Cardiac septum (tissue), 1 donor: ENCODE measurements at regions of chr10 and their contacts with region 1.

Region 1: GRCh38 chr10:43420369-43421200 is 11.6 kb upstream of the HNRNPF start:
- DNase-seq: peak; percentile 91

Region 2: GRCh38 chr10:43407576-43408330 is 12.8 kb before region 1 on chr10:
- intact Hi-C with region 1: loop called (anchors 1 kb)
- DNase-seq: peak; percentile 97

Region 3: GRCh38 chr10:43436400-43437140 is 16.0 kb after region 1 on chr10 and contains the start of gene ZNF487:
- intact Hi-C with region 1: loop called (anchors 1 kb)
- DNase-seq: peak; percentile 96
- total RNA-seq, gene ZNF487: 2.7 TPM